GM12878 (cell line): ENCODE measurements at regions of chr2 and their contacts with region 1.

Region 1: GRCh38 chr2:113930448-113930847 is 40.6 kb downstream of the ACTR3 start:
- DNase-seq: no peak
- ATAC-seq: peak; percentile 36; the same call in 1 of the 3 replicates
- H3K4me3 ChIP-seq: no peak overlapping the region
- H3K27ac ChIP-seq: no peak overlapping the region
- H3K4me1 ChIP-seq: no peaks in the 10 kb centered on the region
- H3K27me3 ChIP-seq: no peaks in the 10 kb centered on the region
- CTCF ChIP-seq: no peak
- EP300 ChIP-seq: no peak
- POLR2A ChIP-seq: no peak
- RAD21 ChIP-seq: no peak

Region 2: DNA sequence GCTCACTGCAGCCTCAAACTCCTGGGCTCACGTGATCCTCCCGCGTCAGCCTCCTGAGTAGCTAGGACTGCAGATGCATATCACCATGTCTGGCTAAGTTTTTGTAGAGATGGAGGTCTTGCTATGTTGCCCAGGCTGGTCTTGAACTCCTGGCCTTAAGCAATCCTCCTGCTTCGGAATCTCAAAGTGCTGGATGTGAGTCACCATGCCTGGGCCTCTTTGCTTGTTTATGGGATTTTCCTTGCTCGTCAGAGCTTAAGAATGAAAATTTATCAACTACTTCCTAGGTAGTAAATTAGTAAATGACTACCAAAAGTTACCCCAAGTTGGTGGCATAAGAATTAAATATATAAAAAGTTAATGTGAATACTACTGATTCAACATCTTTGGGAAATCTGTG is 10.4 kb after region 1 on chr2:
- CTCF ChIA-PET with region 1: interaction called, 4 read pairs
- POLR2A ChIA-PET with region 1: interaction called, 6 read pairs
- RAD21 ChIA-PET with region 1: no interaction called
- SMC1A ChIA-PET with region 1: interaction called, 12 read pairs
- in situ Hi-C with region 1: no loop called
- intact Hi-C with region 1: no loop called
- DNase-seq: no peak
- ATAC-seq: no peak
- H3K4me3 ChIP-seq: no peak overlapping the region
- H3K27ac ChIP-seq: no peak overlapping the region
- H3K4me1 ChIP-seq: no peaks in the 10 kb centered on the region
- H3K27me3 ChIP-seq: no peaks in the 10 kb centered on the region
- CTCF ChIP-seq: no peak
- EP300 ChIP-seq: no peak
- POLR2A ChIP-seq: no peak
- RAD21 ChIP-seq: no peak

Region 3: DNA sequence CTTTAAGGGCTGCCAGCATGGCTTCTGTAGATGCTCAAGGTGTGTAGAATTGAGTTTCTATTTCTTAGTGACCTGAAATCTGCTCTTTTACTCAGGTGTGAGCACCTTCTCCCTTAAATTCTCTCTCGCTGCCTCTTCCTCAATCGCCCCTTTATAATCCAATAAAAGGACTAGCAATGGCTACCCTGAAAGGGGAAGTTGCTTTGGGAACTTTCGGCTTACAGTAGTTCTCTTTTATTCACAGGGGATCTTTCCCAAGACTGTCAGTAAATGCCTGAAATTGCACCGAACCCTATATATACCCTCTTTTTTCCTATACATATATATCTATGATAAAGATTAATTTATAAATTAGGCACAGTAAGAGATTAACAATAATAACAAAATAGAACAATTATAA is 81.3 kb after region 1 on chr2:
- CTCF ChIA-PET with region 1: no interaction called
- POLR2A ChIA-PET with region 1: no interaction called
- RAD21 ChIA-PET with region 1: no interaction called
- SMC1A ChIA-PET with region 1: no interaction called
- in situ Hi-C with region 1: no loop called
- intact Hi-C with region 1: no loop called
- DNase-seq: no peak
- ATAC-seq: no peak; the same call in 2 of the 3 replicates
- H3K4me3 ChIP-seq: no peak overlapping the region
- H3K27ac ChIP-seq: no peak overlapping the region
- H3K4me1 ChIP-seq: no peaks in the 10 kb centered on the region
- H3K27me3 ChIP-seq: peaks cover 0 to 1% of the 10 kb centered on the region in 2 experiments; a peak in 2 of 4 replicates
- CTCF ChIP-seq: no peak
- EP300 ChIP-seq: no peak
- POLR2A ChIP-seq: no peak
- RAD21 ChIP-seq: no peak